Dorsolateral prefrontal cortex (tissue), 120 donors: ENCODE measurements at regions of chr13 and their contacts with region 1.

Region 1: GRCh38 chr13:109786457-109787134 is at the start of gene IRS2:
- DNase-seq: peak; percentile 92 to 98 (median 98)
- H3K4me3 ChIP-seq: peak within 1 kb of the TSS; percentile 62 to 92 (median 82)
- H3K27ac ChIP-seq: peak within 1 kb of the TSS; percentile 79 to 97 (median 94)
- H3K27me3 ChIP-seq: no peaks in the 10 kb centered on the region
- CTCF ChIP-seq: peak in 1 of 56 donors; percentile 8
- total RNA-seq, gene IRS2: 46.0 to 107 (median 73.1) TPM

Region 2: GRCh38 chr13:108218044-108218974 is 1568.3 kb before region 1 on chr13 and contains the start of gene ABHD13:
- intact Hi-C with region 1: loop called in 1 of 2 experiments (anchors 10 kb)
- DNase-seq: peak; percentile 79 to 95 (median 84)
- H3K4me3 ChIP-seq: peak within 1 kb of the TSS; percentile 50 to 100 (median 96)
- H3K27ac ChIP-seq: peak within 1 kb of the TSS; percentile 60 to 97 (median 90)
- H3K27me3 ChIP-seq: no peaks in the 10 kb centered on the region
- CTCF ChIP-seq: peak in 33 of 56 donors; percentile 2 to 60 (median 31)
- total RNA-seq, gene ABHD13: 7.4 to 17.4 (median 12.0) TPM

Region 3: GRCh38 chr13:109145631-109146030 is 641.0 kb before region 1 on chr13:
- intact Hi-C with region 1: loop called in 1 of 2 experiments (anchors 5 kb)
- DNase-seq: peak in 2 of 10 donors; percentile 48 to 59
- H3K4me3 ChIP-seq: no peak overlapping the region
- H3K27ac ChIP-seq: no peak overlapping the region
- H3K27me3 ChIP-seq: peaks cover 0 to 22% (median 5%) of the 10 kb centered on the region in 45 donors
- CTCF ChIP-seq: peak in 55 of 56 donors; percentile 34 to 82 (median 67)

Region 4: GRCh38 chr13:109361562-109362289 is 424.9 kb before region 1 on chr13:
- intact Hi-C with region 1: loop called in 1 of 2 experiments (anchors 10 kb)
- DNase-seq: peak in 1 of 10 donors; percentile 34
- H3K4me3 ChIP-seq: no peak overlapping the region
- H3K27ac ChIP-seq: no peak overlapping the region
- H3K27me3 ChIP-seq: no peaks in the 10 kb centered on the region
- CTCF ChIP-seq: no peak

Region 5: DNA sequence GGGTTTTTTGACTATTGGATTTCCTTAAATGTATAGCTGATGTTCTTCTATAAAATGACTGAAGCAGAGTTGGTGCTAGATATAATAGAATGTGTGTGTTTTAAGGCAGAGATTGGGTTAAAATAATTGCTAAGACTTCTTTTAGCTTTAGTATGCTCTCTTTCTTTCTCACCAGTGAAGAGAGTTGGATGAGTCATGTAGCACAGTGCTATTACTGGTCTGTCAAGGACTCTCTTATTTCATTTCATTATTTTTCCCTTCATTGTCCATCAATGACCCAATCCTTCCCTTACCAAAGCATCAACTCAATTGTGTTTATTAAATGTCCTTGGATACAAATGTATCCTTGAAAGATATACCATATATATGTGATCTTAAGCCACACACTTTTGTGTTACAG is 269.1 kb before region 1 on chr13:
- intact Hi-C with region 1: no loop called
- DNase-seq: no peak
- H3K4me3 ChIP-seq: no peak overlapping the region
- H3K27ac ChIP-seq: peak overlapping the region in 16 of 59 donors; percentile 2 to 74 (median 32)
- H3K27me3 ChIP-seq: no peaks in the 10 kb centered on the region
- CTCF ChIP-seq: no peak

Region 6: GRCh38 chr13:110134801-110135200 is 348.2 kb after region 1 on chr13:
- intact Hi-C with region 1: loop called in 1 of 2 experiments (anchors 5 kb)
- DNase-seq: no peak
- H3K4me3 ChIP-seq: no peak overlapping the region
- H3K27ac ChIP-seq: peak overlapping the region in 32 of 59 donors; percentile 2 to 67 (median 41)
- H3K27me3 ChIP-seq: no peaks in the 10 kb centered on the region
- CTCF ChIP-seq: no peak